Heart left ventricle (tissue), 16 donors: ENCODE measurements at regions of chr14 and their contacts with region 1.

Region 1: DNA sequence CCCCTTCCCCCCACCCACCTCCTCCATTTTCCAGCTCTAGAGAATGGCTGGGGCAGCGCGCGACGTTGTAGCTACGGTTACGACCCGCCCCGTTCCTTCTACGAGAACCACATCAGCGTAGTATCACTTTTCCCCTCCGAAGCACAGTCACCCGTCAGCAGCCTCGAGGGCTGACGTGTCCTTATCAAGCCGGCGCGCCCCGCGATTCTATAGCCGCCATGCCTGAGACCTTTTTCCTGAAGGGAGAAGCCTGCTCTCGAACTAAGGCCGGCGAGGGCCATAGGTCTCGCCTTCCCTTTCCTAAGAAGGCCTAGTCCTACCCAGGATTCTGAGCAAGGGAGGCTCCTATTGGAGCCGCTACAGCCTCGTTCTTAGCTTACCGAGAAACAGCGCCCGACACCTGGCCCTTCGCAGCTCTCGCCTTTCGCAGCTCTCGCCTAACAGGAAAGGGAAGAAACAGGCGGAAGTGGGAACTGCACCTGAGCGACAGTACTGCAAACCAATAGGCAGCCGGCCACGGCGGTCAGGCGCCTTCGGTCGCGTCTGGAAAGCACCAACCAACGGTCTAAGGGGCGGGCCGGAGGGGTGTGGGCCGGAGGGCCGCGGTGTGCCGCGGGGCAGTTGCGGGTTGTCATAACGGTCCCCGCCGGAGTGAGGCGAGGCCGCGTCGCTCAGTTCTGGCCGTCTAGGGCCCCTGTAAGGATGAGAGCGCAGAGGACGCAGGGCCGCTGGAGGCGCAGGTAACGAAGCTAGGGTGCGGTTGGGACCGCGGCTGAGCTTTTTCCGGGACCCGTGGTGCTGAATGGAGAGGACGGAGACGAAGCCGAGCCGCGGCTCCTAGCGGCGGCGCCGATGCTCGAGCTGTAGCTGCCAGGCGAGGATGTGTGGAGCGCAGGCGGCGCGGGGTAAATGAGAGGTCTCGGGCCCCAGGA is at the starts of genes MGAT2 and RPL36AL:
- DNase-seq: peak; percentile 98 to 99 (median 99)
- ATAC-seq: peak; percentile 99 to 100 (median 100)
- H3K4me3 ChIP-seq: peak within 1 kb of the TSS; percentile 60 to 96 (median 76)
- H3K27ac ChIP-seq: peak within 1 kb of the TSS; percentile 86 to 98 (median 92)
- H3K4me1 ChIP-seq: peaks cover 0 to 57% (median 31%) of the 10 kb centered on the region in 12 donors
- H3K27me3 ChIP-seq: no peaks in the 10 kb centered on the region
- CTCF ChIP-seq: peak in 8 of 12 donors; percentile 17 to 59 (median 32)
- POLR2A ChIP-seq: peak; percentile 64 to 92
- total RNA-seq, gene MGAT2: 12.5 to 28.8 (median 16.4) TPM
- total RNA-seq, gene RPL36AL: 107 to 262 (median 138) TPM

Region 2: DNA sequence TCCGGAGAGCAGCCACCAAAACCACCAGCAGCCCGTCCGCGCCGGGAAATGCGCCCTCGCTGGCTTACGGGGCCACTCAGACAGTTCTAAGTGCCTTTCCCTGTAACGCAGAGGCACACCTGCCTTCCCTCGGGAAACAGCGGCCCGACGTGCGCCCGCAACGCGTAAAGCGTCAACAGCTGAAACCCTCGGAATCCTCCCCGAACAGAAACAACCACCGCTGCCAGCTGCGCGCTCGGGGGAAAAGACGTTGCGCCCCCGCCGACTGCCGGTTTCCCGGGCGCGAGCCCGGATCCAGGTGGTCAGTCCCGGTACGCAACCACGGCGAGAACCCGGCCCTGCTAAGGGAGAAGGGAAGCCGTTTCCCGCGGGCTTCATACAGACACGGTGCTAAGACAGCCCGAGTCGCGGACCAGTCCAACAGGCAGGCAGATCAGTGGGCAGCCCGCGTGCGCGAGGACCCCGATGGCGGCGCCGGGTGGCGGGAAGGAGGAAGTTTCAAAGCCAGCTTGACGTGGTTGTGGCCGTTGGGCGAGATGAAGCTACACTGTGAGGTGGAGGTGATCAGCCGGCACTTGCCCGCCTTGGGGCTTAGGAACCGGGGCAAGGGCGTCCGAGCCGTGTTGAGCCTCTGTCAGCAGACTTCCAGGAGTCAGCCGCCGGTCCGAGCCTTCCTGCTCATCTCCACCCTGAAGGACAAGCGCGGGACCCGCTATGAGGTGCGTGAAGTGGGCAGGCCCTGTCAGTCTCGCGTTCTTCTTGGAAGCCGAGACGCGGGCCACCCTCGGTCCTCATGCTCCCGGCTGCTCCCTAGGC is 21.8 kb before region 1 on chr14 and contains the start of gene LRR1:
- intact Hi-C with region 1: loop called in 1 of 10 experiments (anchors 2 kb)
- DNase-seq: peak; percentile 82 to 93 (median 88)
- ATAC-seq: peak; percentile 86 to 92 (median 90)
- H3K4me3 ChIP-seq: peak within 1 kb of the TSS; percentile 63 to 97 (median 78)
- H3K27ac ChIP-seq: peak within 1 kb of the TSS; percentile 83 to 98 (median 92)
- H3K4me1 ChIP-seq: peaks cover 0 to 42% (median 7%) of the 10 kb centered on the region in 12 donors
- H3K27me3 ChIP-seq: no peaks in the 10 kb centered on the region
- CTCF ChIP-seq: peak in 2 of 12 donors; percentile 23
- POLR2A ChIP-seq: peak in 1 of 2 donors; percentile 29
- total RNA-seq, gene LRR1: 2.5 to 39.6 (median 7.5) TPM